ENCODE measurements at regions of chr9 and their contacts with region 1.

Region 1: DNA sequence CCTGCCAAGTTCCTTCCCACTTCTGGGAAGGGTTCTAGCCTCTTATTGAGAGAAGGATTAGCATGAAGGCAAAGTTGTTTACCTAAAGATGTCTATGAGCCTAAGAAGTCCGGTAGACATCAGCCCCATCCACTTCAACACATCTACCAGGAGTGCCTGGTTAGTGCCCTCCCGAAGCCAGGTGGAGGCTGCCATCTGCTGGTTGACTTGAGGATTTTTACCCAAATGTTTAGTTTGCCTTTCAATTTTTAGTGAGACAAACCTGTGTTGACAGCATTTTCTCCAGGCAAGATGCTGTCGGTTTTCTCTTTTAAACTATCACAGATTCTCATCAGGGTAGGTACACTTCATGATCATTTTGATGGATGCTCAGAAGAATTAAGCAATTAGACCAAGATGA is 83.6 kb upstream of the TNFSF8 start:
- DNase-seq: no peak
- H3K4me3 ChIP-seq: no peak overlapping the region
- H3K27ac ChIP-seq: no peak overlapping the region
- H3K4me1 ChIP-seq: no peaks in the 10 kb centered on the region
- H3K27me3 ChIP-seq: peaks cover 5% of the 10 kb centered on the region
- CTCF ChIP-seq: peak; percentile 78 to 86 (median 82)

Region 2: GRCh38 chr9:114681594-114682332 is 332.2 kb before region 1 on chr9 and contains the start of gene TEX48:
- dilution Hi-C with region 1: loop called (anchors 25 kb)
- DNase-seq: peak; percentile 67
- H3K4me3 ChIP-seq: no peak within 1 kb of the TSS
- H3K27ac ChIP-seq: no peak within 1 kb of the TSS
- H3K4me1 ChIP-seq: peaks cover 22% of the 10 kb centered on the region
- H3K27me3 ChIP-seq: no peaks in the 10 kb centered on the region
- CTCF ChIP-seq: peak; percentile 83 to 96 (median 89)
- polyA plus RNA-seq, gene TEX48: not detected in 3 replicates

Region 3: DNA sequence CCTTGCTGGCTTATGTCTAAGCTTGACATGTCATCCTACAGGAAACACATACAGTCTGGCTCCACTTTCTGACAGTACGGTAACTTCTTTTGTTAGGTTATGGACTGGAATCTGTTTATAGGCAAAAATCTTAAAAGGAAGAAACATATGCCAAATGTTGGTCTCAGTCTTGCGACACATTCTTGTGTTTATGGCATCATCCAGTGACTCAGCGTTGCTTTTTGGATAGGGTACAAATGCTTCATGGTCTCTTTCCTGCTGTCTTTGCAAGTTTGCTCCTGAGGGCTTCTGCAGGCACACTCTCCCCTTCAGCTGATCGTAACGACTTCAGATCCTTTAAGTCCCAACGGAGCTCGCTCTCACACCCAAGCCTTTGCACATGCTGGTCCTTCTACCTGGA is 60.1 kb before region 1 on chr9:
- dilution Hi-C with region 1: no loop called
- DNase-seq: no peak
- H3K4me3 ChIP-seq: no peak overlapping the region
- H3K27ac ChIP-seq: no peak overlapping the region
- H3K4me1 ChIP-seq: peaks cover 8% of the 10 kb centered on the region
- H3K27me3 ChIP-seq: no peaks in the 10 kb centered on the region
- CTCF ChIP-seq: no peak

Region 4: DNA sequence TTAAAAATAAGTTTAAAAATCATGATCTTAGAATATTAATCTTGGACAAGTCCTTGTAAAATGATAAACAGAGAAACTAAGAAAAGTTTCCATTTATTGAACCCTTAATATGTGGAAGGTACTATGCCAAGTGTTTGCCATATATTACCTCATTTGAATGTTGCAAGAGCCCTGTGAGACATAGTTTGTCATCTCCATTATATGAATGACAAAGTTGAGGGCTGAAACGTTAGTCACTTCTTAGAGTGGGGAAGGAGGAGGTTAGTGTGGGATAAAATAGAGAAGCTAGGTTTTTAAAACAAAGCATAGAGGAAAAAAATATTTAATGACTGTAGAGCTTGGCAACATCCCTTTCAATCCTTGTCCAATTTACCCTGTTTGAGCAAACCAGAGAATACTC is 101.9 kb after region 1 on chr9:
- dilution Hi-C with region 1: no loop called
- DNase-seq: no peak
- H3K4me3 ChIP-seq: peak overlapping the region in 2 of 3 experiments; percentile 70 to 80
- H3K27ac ChIP-seq: peak overlapping the region; percentile 96
- H3K4me1 ChIP-seq: peaks cover 57% of the 10 kb centered on the region
- H3K27me3 ChIP-seq: no peaks in the 10 kb centered on the region
- CTCF ChIP-seq: no peak